ENCODE measurements at regions of chr2 and their contacts with region 1.

Region 1: DNA sequence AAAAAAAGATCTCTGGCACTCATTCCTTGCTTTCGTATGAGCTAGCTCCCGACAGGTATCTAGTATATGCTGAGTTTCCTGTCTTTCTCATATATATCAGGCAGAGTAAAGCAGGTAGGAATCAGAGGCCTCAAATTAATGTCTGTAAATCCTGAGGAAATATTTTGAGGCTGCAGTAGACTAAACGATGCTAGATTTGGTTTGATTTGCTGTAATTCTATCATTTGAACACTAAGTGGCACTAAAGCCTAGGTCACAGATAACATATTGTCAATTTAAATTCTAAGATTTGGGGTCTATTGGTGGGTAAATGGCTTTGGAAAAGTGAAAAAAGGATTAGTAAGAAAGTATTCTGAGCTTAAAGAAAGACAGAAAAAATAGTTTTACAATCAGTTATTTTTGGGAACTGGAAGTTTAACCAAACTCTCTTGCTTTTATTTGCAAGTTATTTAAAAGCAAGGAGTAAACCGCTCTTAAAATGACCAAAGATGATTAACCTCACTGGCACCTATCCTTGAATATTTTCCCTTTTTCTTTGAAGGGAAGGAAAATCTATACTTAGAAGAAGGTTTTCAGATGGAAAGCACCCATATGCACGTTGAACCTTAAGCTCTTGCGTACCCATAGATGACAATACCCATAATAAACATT is 37.6 kb upstream of the SLC4A10 start:
- DNase-seq: no peak
- H3K4me3 Mint-ChIP-seq: no peak overlapping the region
- H3K27ac Mint-ChIP-seq: no peak overlapping the region
- H3K4me1 Mint-ChIP-seq: peaks cover 1% of the 10 kb centered on the region
- H3K27me3 Mint-ChIP-seq: peaks cover 29% of the 10 kb centered on the region

Region 2: GRCh38 chr2:161545870-161546269 is 40.8 kb before region 1 on chr2:
- CTCF ChIA-PET with region 1: no interaction called
- POLR2A ChIA-PET with region 1: no interaction called
- DNase-seq: no peak
- H3K4me3 Mint-ChIP-seq: no peak overlapping the region
- H3K27ac Mint-ChIP-seq: no peak overlapping the region
- H3K4me1 Mint-ChIP-seq: no peaks in the 10 kb centered on the region
- H3K27me3 Mint-ChIP-seq: peaks cover 3% of the 10 kb centered on the region

Region 3: DNA sequence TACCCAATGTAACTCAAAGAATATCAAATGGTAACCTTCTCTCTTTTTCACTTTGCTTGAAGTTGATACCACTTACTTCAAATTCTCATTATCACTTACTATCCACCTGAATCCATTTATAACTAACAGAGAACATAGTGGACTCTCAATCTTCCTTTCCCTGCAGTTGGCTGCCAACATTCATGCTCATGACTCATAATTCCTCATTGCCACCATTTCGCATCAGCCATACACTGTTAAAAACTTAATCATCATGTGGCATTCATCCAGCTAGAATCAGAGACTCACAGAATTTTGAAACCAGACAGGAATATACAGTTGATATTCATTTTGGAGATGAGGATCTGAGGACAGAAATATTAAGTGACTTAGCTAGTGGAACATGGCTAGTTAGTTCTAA is 94.4 kb after region 1 on chr2:
- CTCF ChIA-PET with region 1: no interaction called
- POLR2A ChIA-PET with region 1: no interaction called
- DNase-seq: no peak
- H3K4me3 Mint-ChIP-seq: no peak overlapping the region
- H3K27ac Mint-ChIP-seq: no peak overlapping the region
- H3K4me1 Mint-ChIP-seq: no peaks in the 10 kb centered on the region
- H3K27me3 Mint-ChIP-seq: peaks cover 14% of the 10 kb centered on the region

Region 4: GRCh38 chr2:162126111-162126519 is 539.5 kb after region 1 on chr2:
- CTCF ChIA-PET with region 1: interaction called, 13 read pairs
- POLR2A ChIA-PET with region 1: no interaction called
- DNase-seq: no peak
- H3K4me3 Mint-ChIP-seq: no peak overlapping the region
- H3K27ac Mint-ChIP-seq: peak overlapping the region; percentile 68
- H3K4me1 Mint-ChIP-seq: peaks cover 42% of the 10 kb centered on the region
- H3K27me3 Mint-ChIP-seq: no peaks in the 10 kb centered on the region